ENCODE measurements at regions of chr19 and their contacts with region 1.

Region 1: GRCh38 chr19:33771384-33772101 is 25.1 kb upstream of the KCTD15 start:
- DNase-seq: peak; percentile 51
- H3K4me3 ChIP-seq: no peak overlapping the region
- H3K27ac ChIP-seq: no peak overlapping the region
- H3K4me1 ChIP-seq: no peaks in the 10 kb centered on the region
- H3K27me3 ChIP-seq: no peaks in the 10 kb centered on the region
- CTCF ChIP-seq: peak; percentile 76 to 82
- POLR2A ChIP-seq: no peak

Region 2: GRCh38 chr19:33241530-33242101 is 529.9 kb before region 1 on chr19:
- CTCF ChIA-PET with region 1: interaction called, 34 read pairs
- POLR2A ChIA-PET with region 1: no interaction called
- dilution Hi-C with region 1: no loop called
- intact Hi-C with region 1: loop called (anchors 2 kb)
- DNase-seq: peak; percentile 7
- H3K4me3 ChIP-seq: no peak overlapping the region
- H3K27ac ChIP-seq: no peak overlapping the region
- H3K4me1 ChIP-seq: no peaks in the 10 kb centered on the region
- H3K27me3 ChIP-seq: no peaks in the 10 kb centered on the region
- CTCF ChIP-seq: peak; percentile 18 to 56
- POLR2A ChIP-seq: no peak

Region 3: DNA sequence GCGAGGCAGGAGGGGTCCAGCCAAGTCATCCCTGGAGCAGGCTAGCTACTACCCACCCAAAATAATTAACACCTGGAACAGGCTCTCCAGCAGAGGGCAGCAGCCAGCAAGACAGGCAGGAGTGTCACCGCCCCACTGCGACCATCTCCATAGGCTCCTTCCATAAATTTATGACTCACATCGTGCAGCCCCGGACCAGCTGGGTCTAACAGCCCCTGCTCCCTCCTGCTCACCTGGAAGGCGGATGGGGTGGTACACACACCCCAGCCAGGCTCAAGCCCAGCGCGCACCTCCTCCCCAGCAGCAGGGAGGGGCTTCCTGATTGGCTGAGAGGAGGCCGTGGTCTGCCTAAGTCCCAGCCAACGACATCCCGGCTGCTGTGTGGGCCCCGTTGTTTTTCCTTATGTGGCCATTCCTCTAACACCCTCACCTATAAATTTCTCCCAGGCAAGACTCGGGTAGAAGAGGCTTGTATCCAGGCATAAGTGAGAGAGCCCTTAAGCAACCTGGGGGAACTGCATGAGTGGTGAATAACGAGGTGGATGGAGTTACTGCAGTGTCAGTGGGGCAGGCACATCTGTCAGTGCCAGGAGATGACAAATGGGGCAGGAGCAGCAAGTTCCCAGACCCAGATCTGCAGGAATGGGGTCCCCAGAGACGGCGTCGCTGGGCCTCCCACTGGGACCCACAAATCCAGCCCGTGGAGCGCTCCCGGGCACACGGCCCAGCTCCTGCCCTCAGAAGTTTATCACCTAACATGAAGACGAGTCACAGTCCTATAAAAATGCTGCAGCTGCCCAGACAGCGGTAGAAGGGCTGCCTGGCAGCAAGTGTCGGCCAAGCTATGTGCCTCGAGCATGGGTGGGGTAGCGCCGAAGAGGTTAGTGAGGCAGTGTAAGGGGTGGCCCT is 355.0 kb before region 1 on chr19:
- CTCF ChIA-PET with region 1: interaction called, 200 read pairs
- POLR2A ChIA-PET with region 1: no interaction called
- dilution Hi-C with region 1: no loop called
- intact Hi-C with region 1: loop called (anchors 1 kb)
- DNase-seq: peak; percentile 62
- H3K4me3 ChIP-seq: no peak overlapping the region
- H3K27ac ChIP-seq: no peak overlapping the region
- H3K4me1 ChIP-seq: no peaks in the 10 kb centered on the region
- H3K27me3 ChIP-seq: no peaks in the 10 kb centered on the region
- CTCF ChIP-seq: peak; percentile 72 to 79
- POLR2A ChIP-seq: no peak

Region 4: GRCh38 chr19:33748231-33748630 is 23.3 kb before region 1 on chr19:
- CTCF ChIA-PET with region 1: no interaction called
- POLR2A ChIA-PET with region 1: no interaction called
- dilution Hi-C with region 1: no loop called
- intact Hi-C with region 1: no loop called
- DNase-seq: no peak
- H3K4me3 ChIP-seq: no peak overlapping the region
- H3K27ac ChIP-seq: no peak overlapping the region
- H3K4me1 ChIP-seq: no peaks in the 10 kb centered on the region
- H3K27me3 ChIP-seq: no peaks in the 10 kb centered on the region
- CTCF ChIP-seq: no peak
- POLR2A ChIP-seq: no peak

Region 5: DNA sequence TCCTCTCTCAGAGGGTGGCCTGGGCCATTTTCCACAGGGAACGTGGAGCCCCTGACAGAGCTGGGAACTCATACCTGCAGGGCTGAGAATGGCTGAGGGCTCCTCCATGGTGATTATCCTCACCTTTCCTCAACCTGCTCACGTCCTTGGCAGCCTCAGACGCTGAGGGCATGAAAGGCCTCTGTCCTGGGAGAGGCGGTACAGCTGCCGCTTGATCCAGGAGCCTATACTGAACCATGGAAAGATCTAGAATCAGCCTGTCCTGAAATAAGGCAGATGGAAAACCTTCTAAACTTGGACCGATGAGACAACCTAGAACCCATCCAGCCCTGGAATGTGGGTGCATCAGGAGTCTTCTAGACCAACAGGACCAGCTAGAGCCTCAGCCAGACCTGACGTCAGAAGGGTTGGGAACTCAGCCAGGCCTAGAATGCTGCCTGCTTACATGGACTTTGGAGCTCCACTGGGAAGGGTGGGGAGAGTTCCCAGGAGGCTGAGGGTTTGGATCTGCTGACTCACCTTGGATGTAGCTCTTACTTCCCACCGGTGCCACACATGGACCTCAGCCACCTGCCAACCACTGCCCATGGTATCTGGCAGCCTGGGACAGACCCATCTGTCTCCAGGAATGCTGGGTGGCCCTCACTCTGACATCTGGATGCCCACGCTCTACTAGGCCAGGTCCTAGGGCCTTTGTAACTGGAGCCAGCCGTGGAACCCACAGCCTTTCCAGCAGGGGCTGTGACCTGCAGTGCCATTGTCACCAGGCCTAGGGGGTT is 32.7 kb after region 1 on chr19:
- CTCF ChIA-PET with region 1: no interaction called
- POLR2A ChIA-PET with region 1: no interaction called
- dilution Hi-C with region 1: no loop called
- intact Hi-C with region 1: no loop called
- DNase-seq: no peak
- H3K4me3 ChIP-seq: no peak overlapping the region
- H3K27ac ChIP-seq: no peak overlapping the region
- H3K4me1 ChIP-seq: peaks cover under 1% of the 10 kb centered on the region
- H3K27me3 ChIP-seq: no peaks in the 10 kb centered on the region
- CTCF ChIP-seq: no peak
- POLR2A ChIP-seq: no peak